ENCODE measurements at regions of chr6 and their contacts with region 1.

Region 1: DNA sequence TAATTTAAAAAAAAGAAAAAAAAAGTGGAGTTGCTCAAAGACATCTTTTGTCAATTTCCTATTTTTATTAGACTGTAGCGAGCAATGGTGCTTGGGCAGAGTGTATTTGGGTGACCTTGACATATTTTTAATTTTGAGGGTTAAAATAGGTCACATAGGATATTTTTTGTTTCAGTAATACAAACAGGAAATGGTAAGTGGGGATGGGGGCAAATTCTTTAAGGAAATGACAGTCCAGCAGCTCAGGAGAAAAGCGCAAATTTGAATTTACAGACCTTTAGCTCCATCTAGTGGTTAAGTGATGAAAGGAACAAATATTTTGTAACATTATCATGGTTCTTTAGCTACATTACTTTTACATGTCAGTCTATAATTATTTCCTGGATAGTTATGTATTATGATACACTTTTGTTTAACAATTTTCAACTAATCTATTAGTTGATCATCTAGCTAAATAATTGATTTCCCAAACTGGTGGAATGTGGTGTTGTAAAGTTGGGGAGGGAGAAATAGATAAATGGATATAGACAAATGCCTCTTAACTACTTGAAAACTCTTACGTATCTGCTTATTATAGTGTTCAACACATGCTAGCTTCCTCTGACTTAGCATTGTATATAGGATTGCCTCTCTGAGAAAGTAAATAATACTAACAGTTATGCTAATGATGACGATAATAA is 10.0 kb downstream of the CITED2 start:
- DNase-seq: no peak
- H3K4me3 ChIP-seq: no peak overlapping the region
- H3K27ac ChIP-seq: no peak overlapping the region
- H3K4me1 ChIP-seq: peaks cover 19% of the 10 kb centered on the region
- H3K27me3 ChIP-seq: no peaks in the 10 kb centered on the region
- CTCF ChIP-seq: peak; percentile 79

Region 2: GRCh38 chr6:138833816-138834539 is 530.5 kb before region 1 on chr6:
- intact Hi-C with region 1: loop called (anchors 10 kb)
- DNase-seq: peak; percentile 68
- H3K4me3 ChIP-seq: peak overlapping the region; percentile 57
- H3K27ac ChIP-seq: peak overlapping the region; percentile 91
- H3K4me1 ChIP-seq: peaks cover 17% of the 10 kb centered on the region
- H3K27me3 ChIP-seq: no peaks in the 10 kb centered on the region
- CTCF ChIP-seq: no peak

Region 3: GRCh38 chr6:139124887-139125672 is 239.4 kb before region 1 on chr6:
- intact Hi-C with region 1: loop called (anchors 2 kb)
- DNase-seq: peak; percentile 42
- H3K4me3 ChIP-seq: no peak overlapping the region
- H3K27ac ChIP-seq: peak overlapping the region; percentile 66
- H3K4me1 ChIP-seq: peaks cover 4% of the 10 kb centered on the region
- H3K27me3 ChIP-seq: no peaks in the 10 kb centered on the region
- CTCF ChIP-seq: peak; percentile 73

Region 4: GRCh38 chr6:139219271-139219729 is 145.1 kb before region 1 on chr6:
- intact Hi-C with region 1: loop called (anchors 5 kb)
- DNase-seq: peak; percentile 79
- H3K4me3 ChIP-seq: no peak overlapping the region
- H3K27ac ChIP-seq: peak overlapping the region; percentile 74
- H3K4me1 ChIP-seq: peaks cover 17% of the 10 kb centered on the region
- H3K27me3 ChIP-seq: no peaks in the 10 kb centered on the region
- CTCF ChIP-seq: peak; percentile 87

Measured in left ventricle myocardium inferior (tissue), 1 donor.